ENCODE measurements at regions of chr4 and their contacts with region 1.

Region 1: GRCh38 chr4:139177868-139178611 is 1.0 kb upstream of the ELF2 start:
- DNase-seq: peak; percentile 98
- H3K4me3 Mint-ChIP-seq: peak overlapping the region; percentile 90
- H3K27ac Mint-ChIP-seq: peak overlapping the region; percentile 93
- H3K4me1 Mint-ChIP-seq: peaks cover 24% of the 10 kb centered on the region
- H3K27me3 Mint-ChIP-seq: peaks cover 33% of the 10 kb centered on the region

Region 2: DNA sequence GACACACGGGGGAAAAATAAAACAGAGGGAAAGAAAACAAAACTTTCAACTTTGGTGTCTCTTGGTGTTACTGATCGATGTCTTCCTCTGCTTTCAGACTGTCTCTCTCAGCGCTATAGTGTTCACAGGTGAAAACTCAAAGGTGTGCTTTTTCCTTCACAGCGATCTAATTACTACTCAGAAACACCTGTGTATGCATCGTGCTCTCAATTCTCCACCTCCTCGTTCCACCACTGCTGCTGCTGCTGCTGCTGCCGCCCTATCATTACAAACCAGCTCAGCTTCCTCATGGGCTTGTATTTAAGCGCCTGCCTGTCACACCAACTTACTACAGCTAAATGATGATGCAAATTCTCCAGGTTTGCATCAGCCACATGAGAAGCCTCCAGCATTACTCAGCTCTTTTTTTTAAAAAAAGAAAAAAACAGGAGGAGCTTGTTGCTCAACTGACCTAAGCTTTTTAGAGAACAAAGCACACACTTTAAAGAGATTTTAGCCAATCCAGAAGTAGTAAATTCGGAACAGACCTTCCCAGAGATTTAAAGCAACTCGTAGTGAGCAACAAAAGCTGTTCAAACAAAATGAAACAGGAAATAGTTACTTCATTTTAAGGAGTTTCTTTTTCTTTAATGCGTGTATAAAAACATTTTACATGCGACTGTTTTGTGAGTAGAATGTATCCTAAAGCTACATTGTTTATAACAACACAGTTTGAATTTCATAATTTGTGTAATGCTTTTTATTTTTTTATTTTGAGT is 935.8 kb before region 1 on chr4 and contains the start of gene SLC7A11:
- intact Hi-C with region 1: loop called (anchors 10 kb)
- DNase-seq: peak; percentile 74
- H3K4me3 Mint-ChIP-seq: peak within 1 kb of the TSS; percentile 90
- H3K27ac Mint-ChIP-seq: peak within 1 kb of the TSS; percentile 97
- H3K4me1 Mint-ChIP-seq: peaks cover 30% of the 10 kb centered on the region
- H3K27me3 Mint-ChIP-seq: no peaks in the 10 kb centered on the region
- total RNA-seq, gene SLC7A11: 0.92 and 1.8 TPM in 2 replicates

Region 3: DNA sequence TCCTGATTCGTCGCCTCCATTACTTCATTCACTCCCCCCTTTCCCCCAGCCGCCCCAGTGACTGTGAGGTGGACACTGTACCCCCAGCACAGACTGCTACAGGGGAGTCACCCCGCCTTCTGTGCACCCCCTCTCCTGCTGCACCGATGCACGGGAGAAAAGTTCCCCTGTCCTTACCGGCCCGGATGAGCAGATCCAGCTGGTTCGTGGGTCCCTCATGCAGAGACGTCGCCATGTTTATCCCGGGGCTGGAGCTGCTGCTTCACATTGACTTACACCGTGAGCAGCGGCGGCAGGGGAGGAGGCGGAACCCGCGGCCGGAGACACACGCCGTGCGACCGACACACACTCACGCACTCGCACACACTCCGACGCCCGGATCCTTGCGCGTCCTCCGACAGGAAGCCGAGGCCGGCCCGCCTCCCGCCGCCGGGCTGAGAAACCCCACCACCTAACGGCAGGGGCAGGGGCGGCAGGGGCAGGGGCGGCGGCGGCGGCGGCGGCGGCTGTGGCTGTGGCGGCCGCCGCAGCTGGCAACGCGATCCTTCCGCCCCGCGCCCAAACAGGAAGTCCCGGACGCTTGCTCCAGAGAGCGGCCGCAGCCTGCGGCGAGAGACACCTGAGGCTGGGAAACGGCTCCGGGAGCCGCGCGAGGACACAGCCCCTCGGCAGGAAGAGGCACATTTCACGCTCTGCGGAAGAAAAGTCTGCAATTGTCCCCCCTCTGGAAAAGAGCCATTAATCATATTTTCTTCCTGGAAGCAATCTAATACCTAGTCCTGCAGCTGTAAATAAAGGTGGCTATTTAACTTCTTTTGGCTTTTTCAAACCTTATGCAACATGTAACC is 93.9 kb before region 1 on chr4:
- intact Hi-C with region 1: loop called (anchors 1 kb)
- DNase-seq: peak; percentile 81
- H3K4me3 Mint-ChIP-seq: peak overlapping the region; percentile 99
- H3K27ac Mint-ChIP-seq: peak overlapping the region; percentile 99
- H3K4me1 Mint-ChIP-seq: peaks cover 30% of the 10 kb centered on the region
- H3K27me3 Mint-ChIP-seq: no peaks in the 10 kb centered on the region

Region 4: GRCh38 chr4:139266583-139267257 is 88.7 kb after region 1 on chr4:
- intact Hi-C with region 1: loop called (anchors 1 kb)
- DNase-seq: peak; percentile 77
- H3K4me3 Mint-ChIP-seq: peak overlapping the region; percentile 37
- H3K27ac Mint-ChIP-seq: peak overlapping the region; percentile 73
- H3K4me1 Mint-ChIP-seq: peaks cover 27% of the 10 kb centered on the region
- H3K27me3 Mint-ChIP-seq: peaks cover 18% of the 10 kb centered on the region

Region 5: DNA sequence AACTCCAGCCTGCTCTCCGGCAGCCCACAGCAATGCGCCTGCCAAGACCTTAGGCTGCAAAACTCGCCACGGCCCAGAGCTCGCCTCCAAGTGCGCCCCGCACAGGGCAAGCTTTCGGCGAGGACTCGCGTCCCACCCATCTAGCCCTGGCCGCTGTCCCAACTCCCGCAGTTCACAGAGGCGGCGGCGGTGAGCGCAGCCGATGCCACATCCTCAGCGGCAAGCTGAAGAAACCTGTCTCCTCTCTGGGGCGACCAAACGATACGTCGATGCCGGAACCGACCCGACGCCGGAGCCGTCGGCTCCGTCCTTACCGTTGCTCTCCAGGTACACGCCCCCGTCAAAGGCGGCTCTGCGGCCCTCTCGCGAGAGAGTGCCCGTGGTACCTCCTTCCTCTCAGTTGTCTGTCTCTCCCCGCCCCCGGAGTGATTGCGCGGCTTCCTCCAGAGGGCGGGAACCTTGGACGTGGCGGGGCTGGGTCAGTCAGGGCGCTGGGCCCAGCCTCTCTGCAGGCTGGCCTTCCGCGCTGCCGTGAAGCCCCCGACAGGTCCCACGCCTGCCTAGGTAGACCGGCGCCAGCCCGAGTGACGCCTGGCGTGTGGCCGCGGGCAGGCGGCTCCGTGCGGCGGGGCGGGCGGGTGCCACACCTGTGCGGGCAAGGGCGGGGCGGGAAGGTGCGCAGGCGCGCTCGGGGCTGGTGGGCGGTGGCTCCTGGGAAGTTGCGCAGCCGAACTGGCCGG is 275.5 kb after region 1 on chr4:
- intact Hi-C with region 1: loop called (anchors 1 kb)
- DNase-seq: peak; percentile 96
- H3K4me3 Mint-ChIP-seq: peak overlapping the region; percentile 90
- H3K27ac Mint-ChIP-seq: peak overlapping the region; percentile 99
- H3K4me1 Mint-ChIP-seq: peaks cover 52% of the 10 kb centered on the region
- H3K27me3 Mint-ChIP-seq: no peaks in the 10 kb centered on the region

Region 6: DNA sequence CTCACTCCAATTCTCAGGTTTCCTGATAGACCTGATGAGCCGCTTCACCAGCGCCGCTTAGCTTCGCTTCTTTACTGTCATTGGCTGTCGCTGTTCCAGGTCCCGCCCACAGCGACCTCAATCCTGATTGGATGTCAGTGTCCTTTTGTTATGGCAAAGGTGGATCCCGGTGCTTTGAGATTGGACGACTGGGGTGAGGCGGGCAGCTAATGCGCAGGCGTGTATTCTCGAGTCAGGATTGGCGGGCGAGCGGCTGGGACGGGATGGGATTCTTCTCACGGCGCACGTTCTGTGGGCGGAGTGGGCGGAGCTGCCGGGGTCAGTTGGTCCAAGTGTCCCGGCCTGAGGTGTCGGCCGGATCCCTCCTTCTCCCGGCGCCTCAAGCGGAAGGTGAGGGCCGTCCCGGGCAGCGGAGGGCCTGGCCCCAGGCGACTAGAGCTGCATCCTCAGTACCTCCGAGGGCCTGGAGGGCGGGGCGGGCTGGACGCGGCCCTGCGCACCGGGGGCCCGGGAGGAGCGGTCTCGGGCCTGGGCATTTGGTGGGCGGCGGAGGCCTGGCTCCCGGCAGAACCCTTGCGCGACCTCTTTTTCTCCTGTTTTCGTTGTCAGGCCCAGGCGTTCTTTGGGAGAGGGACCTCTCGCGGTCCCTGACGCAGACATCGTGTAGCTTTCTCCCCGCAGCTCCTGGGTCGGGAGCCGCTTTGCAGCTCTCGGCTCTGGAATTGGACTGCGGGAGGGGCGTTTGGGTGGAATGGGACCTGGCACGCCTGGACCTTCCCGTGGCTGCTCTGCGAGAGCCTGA is 1195.5 kb after region 1 on chr4 and contains the start of gene SCOC:
- intact Hi-C with region 1: loop called (anchors 5 kb)
- DNase-seq: peak; percentile 97
- H3K4me3 Mint-ChIP-seq: no peak within 1 kb of the TSS
- H3K27ac Mint-ChIP-seq: no peak within 1 kb of the TSS
- H3K4me1 Mint-ChIP-seq: peaks cover 28% of the 10 kb centered on the region
- H3K27me3 Mint-ChIP-seq: peaks cover 10% of the 10 kb centered on the region
- total RNA-seq, gene SCOC: 36.7 and 38.0 TPM in 2 replicates